ENCODE measurements at regions of chr12 and their contacts with region 1.

Region 1: GRCh38 chr12:55973598-55974307 is at the start of gene RAB5B:
- DNase-seq: peak; percentile 81 to 100 (median 98)
- ATAC-seq: peak; percentile 92
- H3K4me3 ChIP-seq: peak within 1 kb of the TSS; percentile 84
- H3K4me3 Mint-ChIP-seq: no peak within 1 kb of the TSS
- H3K27ac ChIP-seq: peak within 1 kb of the TSS; percentile 88
- H3K27ac Mint-ChIP-seq: no peak within 1 kb of the TSS
- H3K4me1 ChIP-seq: peaks cover 8 to 19% of the 10 kb centered on the region in 2 donors
- H3K4me1 Mint-ChIP-seq: peaks cover 18 to 31% (median 26%) of the 10 kb centered on the region in 7 donors
- H3K27me3 ChIP-seq: no peaks in the 10 kb centered on the region
- H3K27me3 Mint-ChIP-seq: no peaks in the 10 kb centered on the region
- total RNA-seq, gene RAB5B: 45.2 to 109 (median 62.7) TPM

Region 2: DNA sequence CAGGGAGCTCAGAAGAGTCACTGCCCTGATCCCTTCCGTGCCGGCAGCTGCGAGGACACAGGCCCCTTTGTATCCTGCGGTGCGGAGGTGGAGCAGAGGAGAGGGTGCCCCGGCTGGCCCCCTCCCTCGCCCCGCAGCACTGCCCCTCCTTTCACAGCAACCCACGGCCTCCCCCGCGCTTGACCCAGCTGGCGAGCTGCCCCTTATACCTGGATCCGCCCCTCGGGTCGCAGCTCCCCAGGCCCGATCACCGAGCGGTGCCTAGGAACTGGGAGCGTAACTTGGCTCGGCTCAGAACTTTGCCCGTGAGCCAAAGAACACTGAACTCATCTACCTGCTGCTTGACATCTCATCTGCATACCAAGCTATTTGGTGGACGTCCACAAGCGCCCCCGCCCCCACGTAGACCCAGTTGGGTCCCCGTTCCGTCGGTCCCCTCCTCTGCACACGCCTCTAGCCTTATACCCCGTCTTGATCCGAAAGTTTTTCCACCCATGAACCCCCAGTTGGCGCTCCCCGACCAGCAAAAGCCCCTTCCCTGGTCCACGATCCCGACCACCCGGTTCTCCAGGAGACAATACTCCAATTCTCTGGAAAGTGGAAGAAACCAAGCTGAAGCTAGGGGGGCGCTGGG is 143.7 kb before region 1 on chr12:
- CTCF ChIA-PET with region 1: interaction called, 3 read pairs
- POLR2A ChIA-PET with region 1: interaction called, 29 read pairs
- intact Hi-C with region 1: loop called in 1 of 2 experiments (anchors 1 kb)
- DNase-seq: peak in 5 of 9 donors; percentile 16 to 44 (median 20)
- ATAC-seq: peak; percentile 2
- H3K4me3 ChIP-seq: peak overlapping the region; percentile 99
- H3K4me3 Mint-ChIP-seq: peak overlapping the region; percentile 88 to 99 (median 99)
- H3K27ac ChIP-seq: peak overlapping the region; percentile 84
- H3K27ac Mint-ChIP-seq: peak overlapping the region; percentile 85 to 98 (median 95)
- H3K4me1 ChIP-seq: peaks cover 37 to 40% of the 10 kb centered on the region in 2 donors
- H3K4me1 Mint-ChIP-seq: peaks cover 42 to 69% (median 53%) of the 10 kb centered on the region in 7 donors
- H3K27me3 ChIP-seq: no peaks in the 10 kb centered on the region
- H3K27me3 Mint-ChIP-seq: no peaks in the 10 kb centered on the region

Region 3: GRCh38 chr12:55996715-55997534 is 23.2 kb after region 1 on chr12 and contains the start of gene SUOX:
- CTCF ChIA-PET with region 1: interaction called, 6 read pairs
- POLR2A ChIA-PET with region 1: interaction called, 20 read pairs
- intact Hi-C with region 1: loop called in 1 of 2 experiments (anchors 1 kb)
- DNase-seq: peak in 3 of 9 donors; percentile 8 to 58 (median 31)
- ATAC-seq: peak; percentile 93
- H3K4me3 ChIP-seq: no peak within 1 kb of the TSS
- H3K4me3 Mint-ChIP-seq: peak within 1 kb of the TSS; percentile 49 to 87 (median 62)
- H3K27ac ChIP-seq: no peak within 1 kb of the TSS
- H3K27ac Mint-ChIP-seq: peak within 1 kb of the TSS in 7 of 9 donors; percentile 19 to 78 (median 63)
- H3K4me1 ChIP-seq: peaks cover 0 to 14% of the 10 kb centered on the region in 2 donors
- H3K4me1 Mint-ChIP-seq: peaks cover 8 to 37% (median 16%) of the 10 kb centered on the region in 7 donors
- H3K27me3 ChIP-seq: no peaks in the 10 kb centered on the region
- H3K27me3 Mint-ChIP-seq: peaks cover 0 to 4% (median 0%) of the 10 kb centered on the region in 5 donors
- total RNA-seq, gene SUOX: 1.9 to 10.4 (median 7.1) TPM

Region 4: DNA sequence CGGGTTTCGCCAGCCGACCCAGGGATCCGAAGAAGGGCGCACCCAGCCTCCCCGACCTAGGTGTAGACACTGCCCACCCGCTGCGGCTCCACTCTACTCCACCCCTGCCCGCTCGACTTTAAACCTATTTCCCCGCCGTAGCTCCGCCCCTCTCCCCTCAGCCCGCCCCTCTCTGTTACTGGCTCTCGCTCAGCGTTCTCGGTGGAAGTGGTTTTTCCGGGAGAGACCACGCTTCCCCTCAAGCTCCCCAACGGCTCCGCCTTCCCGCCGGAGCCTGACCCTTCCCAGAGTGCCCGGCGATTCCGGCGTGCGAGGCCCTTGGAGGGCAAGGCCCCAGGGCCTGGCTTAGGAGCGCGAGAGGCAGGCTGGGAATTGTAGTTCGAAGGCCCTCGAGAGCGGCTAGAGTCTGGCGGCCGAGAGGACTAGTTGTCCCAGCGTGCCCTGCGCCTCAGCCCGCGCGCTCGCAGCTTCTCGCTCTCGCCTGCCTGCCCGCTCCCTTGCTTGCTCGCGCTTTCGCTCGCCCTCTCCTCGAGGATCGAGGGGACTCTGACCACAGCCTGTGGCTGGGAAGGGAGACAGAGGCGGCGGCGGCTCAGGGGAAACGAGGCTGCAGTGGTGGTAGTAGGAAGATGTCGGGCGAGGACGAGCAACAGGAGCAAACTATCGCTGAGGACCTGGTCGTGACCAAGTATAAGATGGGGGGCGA is 130.5 kb after region 1 on chr12 and contains the start of gene PA2G4:
- CTCF ChIA-PET with region 1: no interaction called
- POLR2A ChIA-PET with region 1: interaction called, 9 read pairs
- intact Hi-C with region 1: loop called (anchors 1 kb)
- DNase-seq: peak; percentile 83 to 97 (median 96)
- ATAC-seq: peak; percentile 93
- H3K4me3 ChIP-seq: peak within 1 kb of the TSS; percentile 87
- H3K4me3 Mint-ChIP-seq: peak within 1 kb of the TSS; percentile 91 to 100 (median 98)
- H3K27ac ChIP-seq: peak within 1 kb of the TSS; percentile 82
- H3K27ac Mint-ChIP-seq: peak within 1 kb of the TSS; percentile 92 to 99 (median 98)
- H3K4me1 ChIP-seq: peaks cover 36 to 37% of the 10 kb centered on the region in 2 donors
- H3K4me1 Mint-ChIP-seq: peaks cover 31 to 69% (median 64%) of the 10 kb centered on the region in 7 donors
- H3K27me3 ChIP-seq: no peaks in the 10 kb centered on the region
- H3K27me3 Mint-ChIP-seq: peaks cover 0 to under 1% (median 0%) of the 10 kb centered on the region in 5 donors
- total RNA-seq, gene PA2G4: 61.7 to 254 (median 109) TPM

Region 5: DNA sequence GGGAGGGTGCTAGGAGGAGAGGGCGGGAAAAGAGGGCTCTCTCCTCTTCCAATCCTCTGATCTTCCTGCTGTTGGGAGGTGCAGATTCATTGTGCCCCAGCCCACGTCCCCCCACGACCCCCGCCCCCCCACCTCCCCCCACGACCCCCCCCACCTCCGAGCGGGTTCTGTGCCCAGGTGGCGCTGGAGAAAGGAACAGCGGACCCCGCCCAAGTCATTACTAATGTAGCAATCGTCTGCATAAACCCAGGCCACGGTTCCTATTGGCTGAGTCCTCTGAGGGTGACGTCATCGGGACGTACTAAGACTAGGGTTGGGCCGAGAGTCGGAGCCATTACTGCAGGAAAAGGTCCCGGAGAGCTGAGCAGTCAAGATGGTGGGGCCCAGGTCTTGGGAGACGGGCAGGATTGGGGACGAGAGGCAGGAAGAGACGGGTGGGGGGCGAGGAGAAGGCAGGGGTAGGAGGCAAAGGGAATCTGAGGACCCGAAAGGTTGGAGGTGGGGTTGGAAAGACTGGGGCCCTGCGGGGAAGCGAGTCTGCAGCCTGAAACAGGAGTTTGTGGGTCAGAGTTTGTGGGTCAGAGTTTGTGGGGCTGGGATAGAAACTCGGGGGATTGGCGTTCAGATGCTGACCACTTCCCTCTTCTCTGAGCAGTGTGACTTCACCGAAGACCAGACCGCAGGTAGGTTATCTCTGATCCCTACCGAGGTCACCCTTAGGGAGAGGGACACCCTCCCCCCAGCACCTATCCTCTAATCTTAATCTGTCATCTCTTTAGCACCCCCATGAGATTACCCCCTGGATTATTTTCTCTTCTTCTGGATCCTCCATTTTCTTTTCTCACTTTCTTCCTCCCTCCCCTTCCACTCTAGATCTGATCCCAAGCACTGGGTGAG is 184.5 kb after region 1 on chr12 and contains the start of gene MYL6:
- CTCF ChIA-PET with region 1: no interaction called
- POLR2A ChIA-PET with region 1: interaction called, 3 read pairs
- intact Hi-C with region 1: loop called in 1 of 2 experiments (anchors 5 kb)
- DNase-seq: peak; percentile 58 to 97 (median 89)
- ATAC-seq: peak; percentile 91
- H3K4me3 ChIP-seq: peak within 1 kb of the TSS; percentile 89
- H3K4me3 Mint-ChIP-seq: peak within 1 kb of the TSS; percentile 94 to 99 (median 96)
- H3K27ac ChIP-seq: peak within 1 kb of the TSS; percentile 98
- H3K27ac Mint-ChIP-seq: peak within 1 kb of the TSS; percentile 88 to 99 (median 97)
- H3K4me1 ChIP-seq: peaks cover 24 to 26% of the 10 kb centered on the region in 2 donors
- H3K4me1 Mint-ChIP-seq: peaks cover 31 to 59% (median 54%) of the 10 kb centered on the region in 7 donors
- H3K27me3 ChIP-seq: no peaks in the 10 kb centered on the region
- H3K27me3 Mint-ChIP-seq: no peaks in the 10 kb centered on the region
- total RNA-seq, gene MYL6: 428 to 1,509 (median 467) TPM

Region 6: DNA sequence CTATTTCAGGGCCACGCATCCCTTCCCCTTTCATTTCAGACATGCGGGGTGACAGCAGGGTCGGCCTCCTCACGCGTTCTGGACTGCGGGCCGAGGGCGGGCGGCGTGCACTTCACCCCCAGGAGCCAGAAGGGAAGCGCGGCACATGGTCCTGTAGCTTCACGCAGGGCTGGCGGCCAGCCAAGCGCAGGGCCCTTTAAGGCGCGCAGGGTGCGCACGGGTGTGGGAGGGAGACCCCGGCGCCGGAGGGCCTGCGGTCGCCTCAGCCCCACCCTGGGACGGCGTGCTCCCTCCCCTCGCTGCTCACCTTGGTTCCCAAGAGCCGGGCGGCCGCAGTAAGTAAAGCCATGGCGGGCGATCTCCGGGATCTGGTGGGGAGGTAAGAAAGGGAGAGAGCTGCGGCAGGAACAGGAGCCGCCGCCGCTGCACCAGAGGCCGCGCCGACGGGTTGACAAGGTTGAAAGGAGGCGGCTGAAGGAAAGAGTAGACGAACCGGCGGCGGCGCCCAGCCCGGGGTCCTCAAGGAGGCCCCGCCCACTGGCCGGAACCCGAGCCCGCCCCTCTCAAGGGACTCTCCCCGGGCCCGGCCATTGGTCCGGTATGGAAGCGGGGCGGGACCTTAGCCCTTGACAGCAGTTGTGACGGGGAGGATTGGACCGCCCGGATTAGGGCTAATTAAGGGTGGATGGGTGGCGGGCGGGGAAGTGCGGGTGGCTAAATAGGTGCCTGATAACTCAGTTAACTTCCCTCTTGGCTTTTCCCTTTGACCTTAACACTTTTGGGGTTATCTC is 326.3 kb after region 1 on chr12 and contains the start of gene CS:
- CTCF ChIA-PET with region 1: no interaction called
- POLR2A ChIA-PET with region 1: no interaction called
- intact Hi-C with region 1: loop called in 1 of 2 experiments (anchors 1 kb)
- DNase-seq: peak; percentile 95 to 99 (median 98)
- ATAC-seq: peak; percentile 98
- H3K4me3 ChIP-seq: peak within 1 kb of the TSS; percentile 73
- H3K4me3 Mint-ChIP-seq: peak within 1 kb of the TSS; percentile 93 to 100 (median 96)
- H3K27ac ChIP-seq: peak within 1 kb of the TSS; percentile 94
- H3K27ac Mint-ChIP-seq: peak within 1 kb of the TSS; percentile 93 to 99 (median 97)
- H3K4me1 ChIP-seq: peaks cover 26 to 48% of the 10 kb centered on the region in 2 donors
- H3K4me1 Mint-ChIP-seq: peaks cover 27 to 58% (median 53%) of the 10 kb centered on the region in 7 donors
- H3K27me3 ChIP-seq: no peaks in the 10 kb centered on the region
- H3K27me3 Mint-ChIP-seq: no peaks in the 10 kb centered on the region
- total RNA-seq, gene CS: 126 to 241 (median 167) TPM

Region 7: DNA sequence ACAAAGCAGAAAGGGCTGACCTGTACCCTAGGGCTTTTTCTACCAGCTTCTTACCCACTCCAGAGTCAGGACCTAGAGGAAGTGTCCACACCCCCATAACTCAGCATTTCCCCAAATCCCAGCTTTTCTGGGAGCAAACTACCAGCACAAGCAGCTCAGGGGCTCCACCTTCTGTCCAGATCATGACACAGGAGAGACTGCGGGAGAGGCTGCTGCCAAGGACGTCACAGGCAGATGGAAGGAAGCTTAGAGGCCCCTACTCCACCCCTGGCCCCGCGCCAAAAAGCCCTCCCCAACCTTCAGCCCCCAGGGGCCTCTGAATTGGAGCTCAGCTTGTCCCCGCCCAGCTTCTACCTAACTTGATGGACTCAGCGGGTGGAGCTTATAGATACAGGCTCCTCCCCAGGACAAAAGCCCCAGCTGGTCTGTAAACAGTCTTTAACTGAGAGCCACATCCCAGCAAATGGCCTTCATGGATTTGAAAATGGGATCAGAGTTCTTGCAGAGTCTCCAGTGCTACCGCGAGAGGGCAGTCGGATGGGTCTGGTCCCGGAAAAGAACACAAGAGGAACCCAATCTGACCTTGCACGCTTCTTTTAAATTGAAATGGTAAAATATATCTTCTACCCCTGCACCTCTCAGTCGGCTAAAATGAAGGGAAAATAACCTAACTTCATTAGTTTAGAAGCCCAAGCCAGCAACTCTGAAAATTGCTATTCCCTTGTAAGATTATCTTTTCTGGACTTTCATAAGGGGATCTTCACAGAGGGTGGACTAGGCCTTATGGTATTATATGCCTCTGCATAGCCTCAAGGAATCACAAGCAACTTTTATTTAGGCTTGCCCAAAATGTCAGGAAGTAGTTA is 663.2 kb after region 1 on chr12:
- CTCF ChIA-PET with region 1: interaction called, 3 read pairs
- POLR2A ChIA-PET with region 1: no interaction called
- intact Hi-C with region 1: loop called in 1 of 2 experiments (anchors 5 kb)
- DNase-seq: peak; percentile 86 to 99 (median 94)
- ATAC-seq: peak; percentile 83
- H3K4me3 ChIP-seq: peak overlapping the region; percentile 73
- H3K4me3 Mint-ChIP-seq: peak overlapping the region; percentile 87 to 100 (median 96)
- H3K27ac ChIP-seq: peak overlapping the region; percentile 83
- H3K27ac Mint-ChIP-seq: peak overlapping the region; percentile 89 to 99 (median 97)
- H3K4me1 ChIP-seq: peaks cover 27 to 36% of the 10 kb centered on the region in 2 donors
- H3K4me1 Mint-ChIP-seq: peaks cover 28 to 69% (median 57%) of the 10 kb centered on the region in 7 donors
- H3K27me3 ChIP-seq: no peaks in the 10 kb centered on the region
- H3K27me3 Mint-ChIP-seq: no peaks in the 10 kb centered on the region

Measured in naive thymus-derived CD4-positive, alpha-beta T cell (primary cell).